Caco-2 (cell line): ENCODE measurements at regions of chr4 and their contacts with region 1.

Region 1: GRCh38 chr4:39559626-39560025 is 32.4 kb upstream of the UGDH start:
- DNase-seq: peak in 1 of 2 experiments; percentile 39
- H3K4me3 ChIP-seq: no peak overlapping the region
- H3K4me3 Mint-ChIP-seq: no peak overlapping the region
- H3K27ac Mint-ChIP-seq: peak overlapping the region; percentile 75
- H3K4me1 ChIP-seq: peaks cover 38% of the 10 kb centered on the region
- H3K4me1 Mint-ChIP-seq: peaks cover 32% of the 10 kb centered on the region
- H3K27me3 ChIP-seq: no peaks in the 10 kb centered on the region
- H3K27me3 Mint-ChIP-seq: no peaks in the 10 kb centered on the region
- CTCF ChIP-seq: no peak

Region 2: GRCh38 chr4:39341075-39341725 is 218.4 kb before region 1 on chr4:
- CTCF ChIA-PET with region 1: no interaction called
- POLR2A ChIA-PET with region 1: no interaction called
- intact Hi-C with region 1: no loop called
- DNase-seq: no peak
- H3K4me3 ChIP-seq: no peak overlapping the region
- H3K4me3 Mint-ChIP-seq: no peak overlapping the region
- H3K27ac Mint-ChIP-seq: no peak overlapping the region
- H3K4me1 ChIP-seq: peaks cover 11% of the 10 kb centered on the region
- H3K4me1 Mint-ChIP-seq: no peaks in the 10 kb centered on the region
- H3K27me3 ChIP-seq: no peaks in the 10 kb centered on the region
- H3K27me3 Mint-ChIP-seq: no peaks in the 10 kb centered on the region
- CTCF ChIP-seq: no peak

Region 3: DNA sequence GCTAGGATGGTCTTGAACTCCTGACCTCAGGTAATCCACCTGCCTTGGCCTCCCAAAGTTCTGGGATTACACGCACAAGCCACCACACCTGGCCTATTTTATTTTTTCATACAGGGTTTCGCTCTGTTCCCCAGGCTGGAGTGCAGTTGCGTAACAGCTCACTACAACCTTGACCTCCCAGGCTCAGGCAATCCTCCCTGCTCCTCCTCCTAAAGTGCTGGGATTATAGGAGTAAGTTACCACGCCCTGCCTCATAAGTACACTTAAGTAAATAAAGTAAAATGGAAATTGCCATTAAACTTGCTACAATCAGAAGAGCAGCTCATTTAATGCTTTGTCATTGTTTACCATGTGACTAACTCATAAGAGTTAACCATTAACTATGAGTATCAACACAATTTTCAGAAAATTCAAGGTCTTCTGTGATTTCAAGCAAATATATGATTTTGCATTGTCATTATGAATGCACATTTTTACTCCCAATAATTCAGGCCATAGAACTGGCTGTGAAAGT is 44.7 kb before region 1 on chr4:
- CTCF ChIA-PET with region 1: no interaction called
- POLR2A ChIA-PET with region 1: interaction called, 3 read pairs
- intact Hi-C with region 1: loop called (anchors 1 kb)
- DNase-seq: peak; percentile 75 to 82
- H3K4me3 ChIP-seq: no peak overlapping the region
- H3K4me3 Mint-ChIP-seq: no peak overlapping the region
- H3K27ac Mint-ChIP-seq: peak overlapping the region; percentile 84
- H3K4me1 ChIP-seq: peaks cover 16% of the 10 kb centered on the region
- H3K4me1 Mint-ChIP-seq: no peaks in the 10 kb centered on the region
- H3K27me3 ChIP-seq: no peaks in the 10 kb centered on the region
- H3K27me3 Mint-ChIP-seq: no peaks in the 10 kb centered on the region
- CTCF ChIP-seq: no peak

Region 4: GRCh38 chr4:39621582-39621981 is 62.0 kb after region 1 on chr4:
- CTCF ChIA-PET with region 1: no interaction called
- POLR2A ChIA-PET with region 1: interaction called, 6 read pairs
- intact Hi-C with region 1: loop called (anchors 5 kb)
- DNase-seq: peak in 1 of 2 experiments; percentile 73
- H3K4me3 ChIP-seq: no peak overlapping the region
- H3K4me3 Mint-ChIP-seq: no peak overlapping the region
- H3K27ac Mint-ChIP-seq: peak overlapping the region; percentile 45
- H3K4me1 ChIP-seq: peaks cover 42% of the 10 kb centered on the region
- H3K4me1 Mint-ChIP-seq: peaks cover 9% of the 10 kb centered on the region
- H3K27me3 ChIP-seq: no peaks in the 10 kb centered on the region
- H3K27me3 Mint-ChIP-seq: no peaks in the 10 kb centered on the region
- CTCF ChIP-seq: no peak

Region 5: GRCh38 chr4:39638354-39639240 is 79.0 kb after region 1 on chr4 and contains the start of gene SMIM14:
- CTCF ChIA-PET with region 1: interaction called, 3 read pairs
- POLR2A ChIA-PET with region 1: interaction called, 16 read pairs
- intact Hi-C with region 1: loop called (anchors 1 kb)
- DNase-seq: peak; percentile 98 to 99
- H3K4me3 ChIP-seq: peak within 1 kb of the TSS; percentile 94
- H3K4me3 Mint-ChIP-seq: peak within 1 kb of the TSS; percentile 85
- H3K27ac Mint-ChIP-seq: peak within 1 kb of the TSS; percentile 74
- H3K4me1 ChIP-seq: peaks cover 28% of the 10 kb centered on the region
- H3K4me1 Mint-ChIP-seq: peaks cover 15% of the 10 kb centered on the region
- H3K27me3 ChIP-seq: no peaks in the 10 kb centered on the region
- H3K27me3 Mint-ChIP-seq: no peaks in the 10 kb centered on the region
- CTCF ChIP-seq: no peak
- total RNA-seq, gene SMIM14: 37.6 and 41.0 TPM in 2 replicates

Region 6: DNA sequence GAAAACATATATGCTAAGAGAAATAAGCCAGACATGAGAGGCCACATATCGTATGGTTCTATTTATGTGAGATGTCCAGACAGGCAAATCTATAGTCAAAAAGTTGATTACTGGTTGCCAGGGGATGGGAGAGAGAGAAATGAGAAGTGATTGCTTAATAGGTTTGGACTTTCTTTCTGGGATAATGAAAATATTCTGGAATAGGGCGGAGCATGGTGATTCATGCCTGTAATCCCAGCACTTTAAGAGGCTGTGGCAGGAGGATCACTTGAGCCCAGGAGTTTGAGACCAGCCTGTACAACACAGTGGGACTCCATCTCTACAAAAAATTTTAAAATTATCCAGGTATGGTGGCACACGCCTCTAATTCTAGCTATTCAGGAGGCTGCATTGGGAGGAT is 1047.6 kb after region 1 on chr4:
- CTCF ChIA-PET with region 1: no interaction called
- POLR2A ChIA-PET with region 1: no interaction called
- intact Hi-C with region 1: no loop called
- DNase-seq: no peak
- H3K4me3 ChIP-seq: no peak overlapping the region
- H3K4me3 Mint-ChIP-seq: no peak overlapping the region
- H3K27ac Mint-ChIP-seq: no peak overlapping the region
- H3K4me1 ChIP-seq: no peaks in the 10 kb centered on the region
- H3K4me1 Mint-ChIP-seq: no peaks in the 10 kb centered on the region
- H3K27me3 ChIP-seq: no peaks in the 10 kb centered on the region
- H3K27me3 Mint-ChIP-seq: no peaks in the 10 kb centered on the region
- CTCF ChIP-seq: no peak